OCI-LY7 (cell line): ENCODE measurements at regions of chr17 and their contacts with region 1.

Region 1: DNA sequence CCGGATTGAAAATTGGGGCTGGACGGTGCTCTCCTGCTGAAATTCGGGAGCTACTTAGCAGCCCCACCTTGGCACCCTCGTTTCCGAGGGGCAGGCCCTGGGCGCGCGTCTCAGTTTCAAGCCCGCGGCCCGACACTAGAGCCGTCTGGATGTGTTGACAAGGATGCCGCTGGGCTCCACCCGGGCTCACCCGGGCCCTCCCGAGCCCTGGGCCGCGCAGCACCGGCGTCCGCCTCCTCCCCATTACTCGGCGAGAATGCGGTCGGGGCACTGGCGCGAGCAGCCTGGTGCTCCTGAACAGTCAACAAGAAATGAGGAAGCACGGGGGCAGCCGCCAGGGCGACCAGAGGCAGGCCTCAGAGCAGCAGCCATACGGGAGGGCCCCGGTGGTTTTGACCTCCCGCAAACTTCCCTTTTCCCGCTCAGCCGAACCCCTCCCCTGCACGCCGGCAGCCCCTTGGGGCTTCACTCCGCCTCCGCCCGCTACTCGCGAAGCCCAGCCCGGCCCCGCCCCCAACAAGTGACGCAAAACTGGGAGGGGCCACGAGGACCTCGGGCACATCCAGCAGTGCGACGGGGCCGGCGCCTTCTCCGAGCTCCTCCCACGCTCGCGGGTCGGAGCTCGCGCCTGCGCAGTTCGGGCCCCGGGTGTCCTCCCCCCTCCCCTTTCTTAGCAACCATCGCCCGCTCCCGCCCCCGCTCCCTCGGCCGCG is 447 bp upstream of the SEC14L1 start:
- DNase-seq: peak; percentile 100
- H3K4me3 ChIP-seq: peak overlapping the region; percentile 93
- H3K27ac ChIP-seq: peak overlapping the region; percentile 86
- H3K4me1 ChIP-seq: peaks cover 37% of the 10 kb centered on the region
- CTCF ChIP-seq: no peak

Region 2: DNA sequence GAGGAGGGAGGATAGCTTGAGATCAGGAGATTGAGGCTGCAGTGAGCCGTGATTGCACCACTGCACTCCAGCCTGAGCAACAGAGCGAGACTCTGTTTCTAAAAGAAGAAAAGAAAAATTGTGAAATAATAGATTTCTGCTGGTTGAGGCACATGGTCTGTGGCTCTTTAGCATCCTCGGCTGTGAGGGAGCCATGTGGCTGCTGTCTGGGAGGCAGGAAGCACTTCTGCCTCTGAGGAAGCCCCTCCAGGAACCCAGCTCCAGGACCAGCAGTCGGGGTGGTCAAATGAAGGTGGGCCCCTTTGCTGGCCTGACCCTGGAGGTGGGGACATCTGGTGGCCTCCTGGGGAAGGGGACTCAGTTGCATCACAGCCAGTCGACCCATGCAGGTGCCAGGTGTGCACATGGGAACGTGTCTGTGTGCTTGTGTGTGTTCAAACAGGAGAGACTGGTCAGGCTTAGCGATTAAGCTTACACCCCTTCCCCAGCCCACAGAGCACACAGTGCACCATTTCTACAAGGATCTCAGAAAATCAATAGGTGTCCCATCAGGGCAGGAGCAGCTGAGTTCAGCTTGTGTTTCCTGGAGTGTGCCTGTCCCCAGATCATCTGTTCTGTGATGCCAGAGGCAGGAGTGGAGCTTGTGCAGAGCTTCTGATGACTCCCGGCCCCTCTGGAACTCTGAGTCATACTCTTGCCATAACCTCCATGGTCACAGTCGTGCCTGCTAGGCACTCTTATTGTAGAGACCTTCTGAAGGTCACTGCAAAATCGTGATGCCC is 296.4 kb before region 1 on chr17:
- CTCF ChIA-PET with region 1: no interaction called
- POLR2A ChIA-PET with region 1: no interaction called
- intact Hi-C with region 1: loop called (anchors 5 kb)
- DNase-seq: peak; percentile 92
- H3K4me3 ChIP-seq: peak overlapping the region; percentile 29
- H3K27ac ChIP-seq: peak overlapping the region; percentile 93
- H3K4me1 ChIP-seq: peaks cover 99% of the 10 kb centered on the region
- CTCF ChIP-seq: peak; percentile 72

Region 3: DNA sequence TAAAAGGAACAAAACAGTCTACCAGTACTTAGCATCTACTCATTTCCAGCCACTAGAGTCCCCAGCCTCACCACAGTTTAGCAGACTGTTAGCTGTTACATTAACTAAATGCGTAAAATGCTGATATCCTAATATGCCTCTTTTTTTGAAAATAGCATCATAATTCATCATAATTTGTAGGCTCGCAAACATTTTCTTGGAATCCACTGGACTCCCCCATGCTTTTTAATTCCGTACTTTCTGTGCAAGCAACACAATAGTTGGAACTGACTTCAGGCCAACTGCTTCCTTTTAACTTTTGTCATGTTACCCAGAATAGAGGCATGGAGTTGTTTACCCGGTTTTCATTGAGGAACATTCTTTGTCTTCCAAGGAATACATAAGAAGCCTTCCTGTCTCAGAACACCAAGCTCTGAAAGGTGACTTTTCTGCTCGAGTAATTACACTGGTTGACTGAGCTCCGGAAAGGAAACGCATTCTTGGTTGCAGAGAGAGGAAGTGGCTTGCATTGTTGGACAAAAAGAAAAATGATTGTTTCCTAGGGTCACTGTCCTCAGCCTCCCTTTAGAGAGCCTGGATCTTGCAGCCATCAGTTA is 30.5 kb before region 1 on chr17:
- CTCF ChIA-PET with region 1: no interaction called
- POLR2A ChIA-PET with region 1: interaction called, 7 read pairs
- intact Hi-C with region 1: loop called (anchors 1 kb)
- DNase-seq: peak; percentile 85
- H3K4me3 ChIP-seq: peak overlapping the region; percentile 27
- H3K27ac ChIP-seq: no peak overlapping the region
- H3K4me1 ChIP-seq: peaks cover 38% of the 10 kb centered on the region
- CTCF ChIP-seq: peak; percentile 49; the same call in 1 of the 2 replicates

Region 4: DNA sequence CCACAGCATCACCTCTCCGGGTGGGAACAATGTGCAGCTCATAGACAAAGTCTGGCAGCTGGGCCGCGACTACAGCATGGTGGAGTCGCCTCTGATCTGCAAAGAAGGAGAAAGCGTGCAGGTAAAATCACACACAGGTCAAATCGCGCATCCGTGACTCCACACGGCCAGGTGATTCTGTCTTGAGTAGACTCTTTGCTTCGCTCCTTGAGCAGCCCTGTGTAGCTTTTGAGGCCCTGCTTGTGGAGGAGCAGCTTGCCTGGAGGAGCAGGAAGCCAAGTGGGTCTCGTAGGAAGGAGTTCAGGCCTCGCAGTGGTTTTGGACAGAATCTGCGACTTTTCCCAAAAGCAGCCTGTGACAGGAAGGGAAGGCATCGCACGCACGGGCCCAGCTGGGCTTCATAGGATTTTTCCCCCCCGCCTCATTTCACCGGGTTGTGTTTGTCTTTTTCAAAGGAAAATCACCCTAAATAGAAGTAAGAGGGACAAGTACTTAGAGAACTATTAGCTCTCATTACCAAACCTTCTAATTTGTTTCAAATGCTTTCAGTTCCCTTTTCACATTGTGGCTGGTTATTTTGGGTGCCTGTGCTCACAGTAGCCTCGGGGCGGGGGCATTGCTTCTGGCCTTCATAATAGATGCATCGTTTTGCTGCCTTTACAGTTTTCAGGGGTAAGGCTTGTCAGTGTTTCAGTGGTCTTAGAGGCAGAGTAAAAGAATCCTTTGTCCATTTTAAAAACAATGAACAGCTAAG is 71.9 kb after region 1 on chr17:
- CTCF ChIA-PET with region 1: interaction called, 13 read pairs
- POLR2A ChIA-PET with region 1: interaction called, 13 read pairs
- intact Hi-C with region 1: no loop called
- DNase-seq: peak; percentile 92
- H3K4me3 ChIP-seq: peak overlapping the region; percentile 54
- H3K27ac ChIP-seq: peak overlapping the region; percentile 87
- H3K4me1 ChIP-seq: peaks cover 53% of the 10 kb centered on the region
- CTCF ChIP-seq: no peak

Region 5: DNA sequence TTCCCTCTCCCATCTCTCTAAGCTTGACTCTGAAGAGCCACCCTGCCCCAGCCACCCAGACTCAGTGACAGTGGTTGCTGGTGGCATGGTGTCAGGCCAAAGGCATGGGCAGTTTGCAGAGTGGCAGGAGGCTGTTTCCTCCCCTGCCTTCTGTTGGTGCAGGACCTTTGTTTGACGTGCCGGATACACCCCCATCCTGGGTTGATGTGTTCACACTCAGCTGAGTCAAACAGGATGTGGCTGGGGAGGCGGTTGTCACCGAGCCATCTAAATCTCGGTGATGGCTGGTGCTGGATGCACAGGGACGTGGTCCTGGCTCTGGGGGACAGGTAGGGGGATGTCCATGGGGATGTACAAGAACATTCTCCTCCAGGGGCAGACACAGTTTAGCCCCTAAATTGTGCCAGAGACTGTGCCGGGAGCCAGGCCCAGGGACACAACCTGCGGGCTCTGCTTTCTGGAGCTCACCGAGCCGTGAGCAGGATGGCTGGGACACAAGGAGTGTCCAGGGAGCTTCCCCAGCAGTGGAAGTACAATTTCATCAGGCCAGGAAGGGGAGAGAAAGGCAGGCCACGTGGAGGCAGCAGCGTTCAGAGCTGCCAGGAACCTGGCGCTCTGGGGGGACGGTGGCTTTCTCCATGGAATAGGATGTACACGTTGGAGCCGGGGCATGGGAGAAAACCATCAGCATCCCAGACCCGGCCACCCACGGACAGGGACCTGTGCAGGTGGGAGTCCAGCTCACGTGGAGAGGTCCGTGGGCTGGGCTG is 264.7 kb after region 1 on chr17:
- CTCF ChIA-PET with region 1: no interaction called
- POLR2A ChIA-PET with region 1: no interaction called
- intact Hi-C with region 1: loop called (anchors 10 kb)
- DNase-seq: peak; percentile 97
- H3K4me3 ChIP-seq: peak overlapping the region; percentile 72
- H3K27ac ChIP-seq: peak overlapping the region; percentile 90
- H3K4me1 ChIP-seq: peaks cover 100% of the 10 kb centered on the region
- CTCF ChIP-seq: 0 out of 2 replicates have a peak, but pooled peaks have one; percentile 25